Gastrocnemius medialis (tissue), 4 donors: ENCODE measurements at regions of chr12 and their contacts with region 1.

Region 1: DNA sequence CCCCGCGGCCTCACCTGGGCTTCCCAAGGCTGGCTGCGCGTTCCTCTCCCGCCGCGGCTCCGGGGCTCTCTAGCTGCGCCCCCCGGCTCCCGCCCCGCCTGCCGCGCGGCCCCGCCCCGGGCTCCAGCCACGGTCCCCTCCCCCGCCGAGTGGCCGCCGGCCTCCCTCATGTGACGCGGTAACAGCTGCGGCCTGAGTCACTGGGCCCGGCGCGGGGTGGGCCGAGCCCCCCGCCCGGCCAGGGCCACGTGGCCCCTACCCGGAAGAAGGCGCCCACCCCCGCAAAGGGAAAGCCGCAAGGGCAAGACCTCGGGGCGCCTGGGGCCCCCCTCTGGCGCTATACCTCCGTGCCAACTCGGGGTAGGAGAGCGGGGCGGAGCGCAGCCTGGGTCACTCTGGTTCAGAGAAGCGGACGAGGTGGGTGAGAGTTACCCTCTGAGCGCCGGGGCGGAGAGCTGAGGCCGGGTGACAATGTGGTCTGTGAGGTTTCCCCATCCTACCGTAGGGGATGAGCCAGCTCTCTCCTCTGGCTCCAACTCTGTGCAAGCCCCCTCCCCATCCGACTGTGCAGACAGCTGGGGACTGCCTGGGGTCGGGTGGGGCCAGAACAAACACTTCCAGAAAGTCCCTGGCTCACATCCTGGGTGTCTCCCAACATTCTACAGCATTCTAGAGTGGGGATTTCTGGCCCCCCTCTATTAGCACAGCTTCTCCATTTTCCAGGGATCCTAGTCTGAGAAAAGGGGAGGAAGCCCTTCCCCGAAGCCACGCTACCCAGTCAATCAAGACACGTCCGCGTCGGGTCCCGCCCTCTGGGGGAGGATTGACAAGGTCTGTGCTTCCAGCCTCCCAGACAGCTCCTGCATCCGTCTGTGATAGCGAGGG is at the start of gene CD63:
- DNase-seq: peak; percentile 88 to 93
- ATAC-seq: peak; percentile 76 to 84
- H3K4me3 ChIP-seq: peak within 1 kb of the TSS; percentile 84 to 96 (median 92)
- H3K27ac ChIP-seq: peak within 1 kb of the TSS; percentile 99 to 100 (median 99)
- H3K4me1 ChIP-seq: peaks cover 24 to 36% of the 10 kb centered on the region in 2 donors
- H3K27me3 ChIP-seq: no peaks in the 10 kb centered on the region
- CTCF ChIP-seq: no peak
- POLR2A ChIP-seq: peak; percentile 93 to 95
- total RNA-seq, gene CD63: 423 to 1,107 (median 634) TPM

Region 2: DNA sequence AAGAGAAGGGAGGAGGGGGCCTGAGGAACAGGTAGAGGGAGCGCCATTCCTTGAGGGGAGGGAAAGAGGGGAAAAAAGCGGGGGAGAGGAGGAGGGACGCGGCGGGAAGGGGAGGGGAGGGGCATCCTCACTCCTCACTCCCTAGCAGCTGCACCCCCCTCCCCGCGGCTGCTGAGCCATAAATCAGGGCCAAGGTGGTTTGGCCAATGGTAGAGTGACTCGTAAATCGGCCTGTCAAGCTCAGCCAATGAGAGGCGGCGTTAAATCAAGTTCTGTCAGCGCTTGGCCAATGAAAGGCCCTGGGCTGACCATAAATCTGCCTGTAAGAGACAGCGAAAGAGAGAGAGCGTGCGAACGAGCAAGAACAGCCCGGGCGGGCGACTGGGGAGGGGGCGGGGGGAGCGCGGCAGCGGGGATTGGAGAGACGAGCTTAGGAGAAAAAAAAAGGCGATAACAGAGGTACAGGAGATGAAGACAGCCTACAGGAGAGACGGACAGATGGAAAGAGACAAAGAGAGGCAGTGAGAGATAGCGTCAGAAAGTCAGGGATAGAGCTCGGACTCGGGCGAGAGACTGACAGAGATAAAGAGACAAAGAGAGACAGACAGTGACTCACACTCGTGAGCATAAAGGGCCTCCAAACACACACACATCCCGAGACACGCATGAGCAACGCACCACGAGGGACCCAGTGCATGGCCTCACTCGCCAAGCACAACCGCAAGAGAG is 1370.0 kb before region 1 on chr12:
- in situ Hi-C with region 1: no loop called
- intact Hi-C with region 1: loop called (anchors 10 kb)
- DNase-seq: peak; percentile 98 to 99
- ATAC-seq: peak; percentile 97 to 98
- H3K4me3 ChIP-seq: peak overlapping the region; percentile 69 to 86 (median 76)
- H3K27ac ChIP-seq: peak overlapping the region; percentile 88 to 94 (median 89)
- H3K4me1 ChIP-seq: peaks cover 12 to 18% of the 10 kb centered on the region in 2 donors
- H3K27me3 ChIP-seq: no peaks in the 10 kb centered on the region
- CTCF ChIP-seq: peak in 1 of 5 experiments; percentile 6
- POLR2A ChIP-seq: peak; percentile 52 to 72

Region 3: DNA sequence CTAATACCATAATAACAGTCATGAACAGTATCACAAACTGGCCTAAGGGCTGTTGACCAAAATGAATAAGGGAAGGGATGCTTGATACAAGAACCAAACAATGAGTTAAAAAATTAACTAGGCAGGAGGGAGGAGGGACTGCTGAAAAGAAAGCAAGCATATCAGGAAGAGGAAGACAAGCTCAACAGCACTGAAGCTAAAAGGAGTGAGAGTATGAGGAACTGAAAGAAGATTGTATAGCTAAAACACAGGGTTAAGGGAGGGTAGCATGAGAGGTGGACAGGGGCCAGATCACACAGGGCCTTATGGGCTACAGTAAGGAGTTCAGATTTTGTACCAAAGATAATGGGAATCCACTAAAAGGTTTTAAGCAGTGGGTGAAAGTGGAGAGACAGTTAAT is 55.5 kb before region 1 on chr12:
- in situ Hi-C with region 1: loop called in 1 of 4 experiments (anchors 10 kb)
- intact Hi-C with region 1: no loop called
- DNase-seq: no peak
- ATAC-seq: peak in 1 of 2 donors; percentile 45
- H3K4me3 ChIP-seq: no peak overlapping the region
- H3K27ac ChIP-seq: no peak overlapping the region
- H3K4me1 ChIP-seq: no peaks in the 10 kb centered on the region
- H3K27me3 ChIP-seq: no peaks in the 10 kb centered on the region
- CTCF ChIP-seq: no peak
- POLR2A ChIP-seq: no peak

Region 4: DNA sequence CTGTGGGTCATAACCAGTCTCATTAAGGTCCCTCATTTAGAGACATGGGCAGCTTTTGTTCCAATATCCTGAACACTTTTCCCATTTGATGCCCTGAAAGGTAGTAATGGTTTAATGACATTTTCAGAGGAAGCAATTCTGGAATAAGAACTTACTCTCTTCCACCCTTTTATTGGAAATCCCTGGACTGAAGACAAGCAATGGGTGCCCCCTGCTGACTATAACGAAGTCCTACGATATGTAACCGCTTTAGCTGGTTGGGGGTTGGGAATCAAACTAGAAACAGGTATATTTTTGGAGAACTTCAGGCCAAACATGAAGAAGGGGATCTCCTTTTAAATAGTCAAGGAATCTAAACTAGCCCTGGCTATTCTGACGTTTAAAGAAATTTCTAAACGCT is 67.9 kb after region 1 on chr12:
- in situ Hi-C with region 1: no loop called
- intact Hi-C with region 1: no loop called
- DNase-seq: no peak
- ATAC-seq: no peak
- H3K4me3 ChIP-seq: no peak overlapping the region
- H3K27ac ChIP-seq: no peak overlapping the region
- H3K4me1 ChIP-seq: no peaks in the 10 kb centered on the region
- H3K27me3 ChIP-seq: no peaks in the 10 kb centered on the region
- CTCF ChIP-seq: peak in 4 of 5 experiments; percentile 6 to 38 (median 22)
- POLR2A ChIP-seq: no peak

Region 5: GRCh38 chr12:55817346-55818139 is 88.4 kb after region 1 on chr12 and contains the starts of genes ORMDL2 and SARNP:
- in situ Hi-C with region 1: loop called in 1 of 4 experiments (anchors 10 kb)
- intact Hi-C with region 1: loop called (anchors 2 kb)
- DNase-seq: peak; percentile 99
- ATAC-seq: peak; percentile 99 to 100
- H3K4me3 ChIP-seq: peak within 1 kb of the TSS; percentile 73 to 96 (median 82)
- H3K27ac ChIP-seq: peak within 1 kb of the TSS; percentile 89 to 93 (median 90)
- H3K4me1 ChIP-seq: peaks cover 22 to 31% of the 10 kb centered on the region in 2 donors
- H3K27me3 ChIP-seq: no peaks in the 10 kb centered on the region
- CTCF ChIP-seq: no peak
- POLR2A ChIP-seq: peak; percentile 59 to 70
- total RNA-seq, gene ORMDL2: 6.6 to 23.1 (median 12.1) TPM
- total RNA-seq, gene SARNP: 46.5 to 66.2 (median 62.8) TPM

Region 6: DNA sequence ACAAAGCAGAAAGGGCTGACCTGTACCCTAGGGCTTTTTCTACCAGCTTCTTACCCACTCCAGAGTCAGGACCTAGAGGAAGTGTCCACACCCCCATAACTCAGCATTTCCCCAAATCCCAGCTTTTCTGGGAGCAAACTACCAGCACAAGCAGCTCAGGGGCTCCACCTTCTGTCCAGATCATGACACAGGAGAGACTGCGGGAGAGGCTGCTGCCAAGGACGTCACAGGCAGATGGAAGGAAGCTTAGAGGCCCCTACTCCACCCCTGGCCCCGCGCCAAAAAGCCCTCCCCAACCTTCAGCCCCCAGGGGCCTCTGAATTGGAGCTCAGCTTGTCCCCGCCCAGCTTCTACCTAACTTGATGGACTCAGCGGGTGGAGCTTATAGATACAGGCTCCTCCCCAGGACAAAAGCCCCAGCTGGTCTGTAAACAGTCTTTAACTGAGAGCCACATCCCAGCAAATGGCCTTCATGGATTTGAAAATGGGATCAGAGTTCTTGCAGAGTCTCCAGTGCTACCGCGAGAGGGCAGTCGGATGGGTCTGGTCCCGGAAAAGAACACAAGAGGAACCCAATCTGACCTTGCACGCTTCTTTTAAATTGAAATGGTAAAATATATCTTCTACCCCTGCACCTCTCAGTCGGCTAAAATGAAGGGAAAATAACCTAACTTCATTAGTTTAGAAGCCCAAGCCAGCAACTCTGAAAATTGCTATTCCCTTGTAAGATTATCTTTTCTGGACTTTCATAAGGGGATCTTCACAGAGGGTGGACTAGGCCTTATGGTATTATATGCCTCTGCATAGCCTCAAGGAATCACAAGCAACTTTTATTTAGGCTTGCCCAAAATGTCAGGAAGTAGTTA is 907.7 kb after region 1 on chr12:
- in situ Hi-C with region 1: no loop called
- intact Hi-C with region 1: loop called (anchors 10 kb)
- DNase-seq: peak; percentile 98 to 99
- ATAC-seq: peak; percentile 74 to 79
- H3K4me3 ChIP-seq: peak overlapping the region; percentile 73 to 88 (median 78)
- H3K27ac ChIP-seq: peak overlapping the region; percentile 95 to 99 (median 97)
- H3K4me1 ChIP-seq: peaks cover 36 to 64% of the 10 kb centered on the region in 2 donors
- H3K27me3 ChIP-seq: no peaks in the 10 kb centered on the region
- CTCF ChIP-seq: peak; percentile 47 to 75 (median 60)
- POLR2A ChIP-seq: peak in 1 of 2 donors; percentile 58

Region 7: GRCh38 chr12:57088459-57089248 is 1359.5 kb after region 1 on chr12 and contains the start of gene NAB2:
- in situ Hi-C with region 1: no loop called
- intact Hi-C with region 1: loop called (anchors 10 kb)
- DNase-seq: peak; percentile 89 to 94
- ATAC-seq: peak; percentile 58 to 73
- H3K4me3 ChIP-seq: peak within 1 kb of the TSS; percentile 84 to 87 (median 85)
- H3K27ac ChIP-seq: peak within 1 kb of the TSS; percentile 94 to 97 (median 94)
- H3K4me1 ChIP-seq: peaks cover 0 to 27% of the 10 kb centered on the region in 2 donors
- H3K27me3 ChIP-seq: no peaks in the 10 kb centered on the region
- CTCF ChIP-seq: no peak
- POLR2A ChIP-seq: peak; percentile 68 to 80
- total RNA-seq, gene NAB2: 4.8 to 9.5 (median 5.5) TPM